Mammary epithelial cell (primary cell): ENCODE measurements at regions of chr19 and their contacts with region 1.

Region 1: DNA sequence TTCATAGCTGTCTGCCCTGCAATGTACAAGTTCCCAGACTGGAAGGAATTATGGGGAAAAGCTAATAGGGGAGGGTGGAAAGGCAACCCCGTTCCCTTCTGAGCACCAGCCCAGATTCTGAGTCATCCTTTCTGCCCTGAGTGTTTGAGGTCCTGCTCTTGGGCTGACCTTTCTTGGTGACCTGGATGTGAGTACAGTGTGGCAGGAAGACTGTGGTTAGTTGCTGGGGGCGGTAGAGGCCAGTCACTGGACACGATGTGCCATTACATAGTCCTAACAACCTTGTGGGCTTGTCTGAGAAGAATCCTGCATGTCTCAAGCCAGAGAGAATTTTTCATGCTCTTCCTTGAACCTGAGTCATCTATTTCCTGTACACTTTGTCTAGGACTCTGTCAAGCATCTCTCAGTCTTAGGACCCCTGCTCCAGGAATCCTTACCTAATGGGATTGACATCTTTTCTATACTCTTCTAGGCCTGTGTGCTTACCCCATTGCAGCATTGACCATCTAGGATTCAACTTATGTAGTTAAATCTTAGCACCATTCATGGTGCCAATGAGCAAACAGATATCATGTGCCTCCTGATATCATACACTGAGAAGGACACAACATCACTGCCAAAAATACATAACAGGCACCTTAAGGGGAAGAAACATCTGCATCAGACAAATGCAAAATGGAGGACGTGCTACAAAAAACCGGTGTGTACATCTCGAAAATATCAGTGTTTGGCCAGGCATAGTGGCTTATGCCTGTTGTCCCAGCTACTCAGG is 8.1 kb upstream of the ANGPTL4 start:
- DNase-seq: peak; percentile 98
- H3K4me3 ChIP-seq: no peak overlapping the region
- H3K27ac ChIP-seq: peak overlapping the region; percentile 55
- H3K4me1 ChIP-seq: peaks cover 26% of the 10 kb centered on the region
- H3K27me3 ChIP-seq: no peaks in the 10 kb centered on the region
- CTCF ChIP-seq: no peak

Region 2: GRCh38 chr19:8242211-8242821 is 113.5 kb before region 1 on chr19:
- CTCF ChIA-PET with region 1: no interaction called
- dilution Hi-C with region 1: no loop called
- in situ Hi-C with region 1: no loop called
- intact Hi-C with region 1: no loop called
- DNase-seq: no peak
- H3K4me3 ChIP-seq: no peak overlapping the region
- H3K27ac ChIP-seq: no peak overlapping the region
- H3K4me1 ChIP-seq: peaks cover 24% of the 10 kb centered on the region
- H3K27me3 ChIP-seq: no peaks in the 10 kb centered on the region
- CTCF ChIP-seq: no peak

Region 3: GRCh38 chr19:8261347-8262310 is 94.2 kb before region 1 on chr19:
- CTCF ChIA-PET with region 1: no interaction called
- dilution Hi-C with region 1: no loop called
- in situ Hi-C with region 1: no loop called
- intact Hi-C with region 1: no loop called
- DNase-seq: no peak
- H3K4me3 ChIP-seq: no peak overlapping the region
- H3K27ac ChIP-seq: no peak overlapping the region
- H3K4me1 ChIP-seq: no peaks in the 10 kb centered on the region
- H3K27me3 ChIP-seq: no peaks in the 10 kb centered on the region
- CTCF ChIP-seq: no peak

Region 4: GRCh38 chr19:8304841-8305621 is 50.8 kb before region 1 on chr19:
- CTCF ChIA-PET with region 1: no interaction called
- dilution Hi-C with region 1: no loop called
- in situ Hi-C with region 1: no loop called
- intact Hi-C with region 1: no loop called
- DNase-seq: no peak
- H3K4me3 ChIP-seq: no peak overlapping the region
- H3K27ac ChIP-seq: no peak overlapping the region
- H3K4me1 ChIP-seq: peaks cover 14% of the 10 kb centered on the region
- H3K27me3 ChIP-seq: no peaks in the 10 kb centered on the region
- CTCF ChIP-seq: no peak

Region 5: DNA sequence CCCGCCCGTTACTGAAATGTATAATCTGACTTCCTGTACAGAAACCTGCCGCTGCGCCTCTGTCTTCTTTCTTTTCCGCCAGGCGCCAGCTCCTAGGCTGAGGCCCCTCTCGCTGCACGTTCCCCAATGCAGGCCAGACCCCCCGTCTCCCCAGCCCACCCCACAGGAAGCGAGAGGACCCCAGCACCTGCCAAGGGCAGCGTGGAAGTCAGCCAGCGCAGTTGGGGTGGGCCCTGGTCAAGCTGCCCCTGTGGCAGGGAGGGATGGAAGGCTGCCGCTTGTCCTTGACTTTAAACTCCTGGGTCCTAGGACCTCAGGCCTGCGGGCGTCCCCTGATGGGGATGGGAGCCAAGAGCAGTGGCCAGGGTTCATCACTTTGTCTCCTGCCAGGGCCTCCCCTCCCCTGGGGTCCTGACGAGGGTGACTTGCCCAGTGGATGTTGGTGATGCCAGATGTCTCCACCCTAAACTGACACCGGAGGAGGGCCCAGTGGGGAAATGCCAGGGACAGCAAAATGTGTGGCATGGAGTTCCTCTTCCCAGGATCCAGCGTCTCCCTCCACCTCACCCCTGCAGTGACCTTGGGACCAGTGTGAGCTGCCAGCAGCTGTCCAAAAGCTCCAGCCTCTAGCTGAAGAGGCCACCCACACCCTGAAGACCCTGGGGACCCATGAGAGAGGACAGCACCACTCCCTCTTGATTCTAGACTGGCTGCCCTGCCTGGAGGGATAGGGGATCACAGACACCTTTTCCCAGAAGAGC is 48.8 kb after region 1 on chr19:
- CTCF ChIA-PET with region 1: interaction called, 18 read pairs
- dilution Hi-C with region 1: no loop called
- in situ Hi-C with region 1: loop called (anchors 5 to 10 kb)
- intact Hi-C with region 1: no loop called
- DNase-seq: no peak
- H3K4me3 ChIP-seq: no peak overlapping the region
- H3K27ac ChIP-seq: no peak overlapping the region
- H3K4me1 ChIP-seq: peaks cover 8% of the 10 kb centered on the region
- H3K27me3 ChIP-seq: no peaks in the 10 kb centered on the region
- CTCF ChIP-seq: no peak

Region 6: GRCh38 chr19:8444645-8445487 is 89.0 kb after region 1 on chr19 and contains the start of gene HNRNPM:
- CTCF ChIA-PET with region 1: no interaction called
- dilution Hi-C with region 1: no loop called
- in situ Hi-C with region 1: no loop called
- intact Hi-C with region 1: loop called (anchors 1 kb)
- DNase-seq: peak; percentile 98
- H3K4me3 ChIP-seq: peak within 1 kb of the TSS; percentile 92 to 96 (median 95)
- H3K27ac ChIP-seq: peak within 1 kb of the TSS; percentile 82
- H3K4me1 ChIP-seq: peaks cover 8% of the 10 kb centered on the region
- H3K27me3 ChIP-seq: no peaks in the 10 kb centered on the region
- CTCF ChIP-seq: no peak
- total RNA-seq, gene HNRNPM: 29.2 to 164 TPM

Region 7: DNA sequence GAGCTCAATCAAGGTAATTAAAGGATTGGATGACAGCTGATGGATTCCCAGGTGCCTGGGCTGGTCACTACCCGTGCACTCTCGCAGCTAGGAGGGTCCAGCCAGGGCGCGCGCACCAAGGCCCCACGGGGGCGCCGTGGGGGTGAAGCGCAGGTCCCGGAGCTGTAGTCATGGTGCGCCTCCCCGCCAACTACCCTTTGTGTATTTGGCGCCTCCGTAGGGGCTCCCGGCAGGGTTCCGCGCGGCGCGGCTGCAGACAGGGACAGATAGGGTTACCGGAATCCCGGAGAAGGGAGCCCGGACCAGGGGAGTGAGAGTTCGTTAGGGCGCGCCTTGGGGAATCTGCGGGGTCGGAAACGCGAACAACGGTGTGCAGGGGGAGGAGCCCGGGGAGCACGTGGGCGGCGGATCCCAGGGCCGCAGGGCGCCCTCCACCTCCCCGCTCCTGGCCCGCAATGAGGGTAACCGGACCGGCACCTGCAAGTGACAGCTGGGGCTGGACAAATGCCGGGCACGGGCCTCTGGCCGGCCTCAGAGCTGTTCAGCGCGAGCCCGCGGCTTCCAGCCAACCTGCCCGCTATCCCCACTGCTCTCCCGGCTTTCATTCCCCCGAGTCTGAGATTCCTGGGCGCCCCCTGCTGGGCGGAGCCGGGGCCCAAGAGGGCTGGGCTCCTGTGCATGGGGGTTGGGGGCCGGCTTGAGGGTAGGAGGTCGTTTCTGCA is 150.0 kb after region 1 on chr19:
- CTCF ChIA-PET with region 1: no interaction called
- dilution Hi-C with region 1: no loop called
- in situ Hi-C with region 1: loop called (anchors 10 kb)
- intact Hi-C with region 1: loop called (anchors 1 kb)
- DNase-seq: peak; percentile 52
- H3K4me3 ChIP-seq: peak overlapping the region; percentile 57 to 72 (median 57)
- H3K27ac ChIP-seq: no peak overlapping the region
- H3K4me1 ChIP-seq: peaks cover 9% of the 10 kb centered on the region
- H3K27me3 ChIP-seq: no peaks in the 10 kb centered on the region
- CTCF ChIP-seq: peak; percentile 55 to 88

Region 8: GRCh38 chr19:9075064-9075949 is 719.5 kb after region 1 on chr19:
- CTCF ChIA-PET with region 1: no interaction called
- dilution Hi-C with region 1: no loop called
- in situ Hi-C with region 1: no loop called
- intact Hi-C with region 1: loop called (anchors 5 kb)
- DNase-seq: peak; percentile 98
- H3K4me3 ChIP-seq: no peak overlapping the region
- H3K27ac ChIP-seq: peak overlapping the region; percentile 24
- H3K4me1 ChIP-seq: peaks cover 9% of the 10 kb centered on the region
- H3K27me3 ChIP-seq: no peaks in the 10 kb centered on the region
- CTCF ChIP-seq: no peak